ENCODE measurements at regions of chr2 and their contacts with region 1.

Region 1: GRCh38 chr2:61426267-61426897 is 44.5 kb downstream of the USP34 start:
- DNase-seq: no peak
- ATAC-seq: peak; percentile 93
- H3K4me3 ChIP-seq: no peak overlapping the region
- H3K27ac ChIP-seq: peak overlapping the region; percentile 39
- H3K4me1 ChIP-seq: peaks cover 32% of the 10 kb centered on the region
- H3K27me3 ChIP-seq: no peaks in the 10 kb centered on the region
- CTCF ChIP-seq: peak; percentile 75 to 91 (median 88)
- EP300 ChIP-seq: no peak
- POLR2A ChIP-seq: no peak
- RAD21 ChIP-seq: peak; percentile 81

Region 2: GRCh38 chr2:61029533-61029932 is 396.8 kb before region 1 on chr2:
- CTCF ChIA-PET with region 1: no interaction called
- POLR2A ChIA-PET with region 1: no interaction called
- RAD21 ChIA-PET with region 1: no interaction called
- SMC1A ChIA-PET with region 1: no interaction called
- in situ Hi-C with region 1: no loop called
- intact Hi-C with region 1: no loop called
- DNase-seq: no peak
- ATAC-seq: no peak
- H3K4me3 ChIP-seq: no peak overlapping the region
- H3K27ac ChIP-seq: no peak overlapping the region
- H3K4me1 ChIP-seq: no peaks in the 10 kb centered on the region
- H3K27me3 ChIP-seq: no peaks in the 10 kb centered on the region
- CTCF ChIP-seq: no peak
- EP300 ChIP-seq: no peak
- POLR2A ChIP-seq: no peak
- RAD21 ChIP-seq: no peak

Region 3: GRCh38 chr2:61410185-61410584 is 16.2 kb before region 1 on chr2:
- CTCF ChIA-PET with region 1: interaction called, 24 read pairs
- POLR2A ChIA-PET with region 1: interaction called, 4 read pairs
- RAD21 ChIA-PET with region 1: no interaction called
- SMC1A ChIA-PET with region 1: interaction called, 6 read pairs
- in situ Hi-C with region 1: no loop called
- intact Hi-C with region 1: no loop called
- DNase-seq: no peak
- ATAC-seq: no peak
- H3K4me3 ChIP-seq: no peak overlapping the region
- H3K27ac ChIP-seq: no peak overlapping the region
- H3K4me1 ChIP-seq: no peaks in the 10 kb centered on the region
- H3K27me3 ChIP-seq: no peaks in the 10 kb centered on the region
- CTCF ChIP-seq: no peak
- EP300 ChIP-seq: no peak
- POLR2A ChIP-seq: no peak
- RAD21 ChIP-seq: no peak

Region 4: GRCh38 chr2:61460163-61460562 is 33.8 kb after region 1 on chr2:
- CTCF ChIA-PET with region 1: interaction called, 44 read pairs
- POLR2A ChIA-PET with region 1: interaction called, 10 read pairs
- RAD21 ChIA-PET with region 1: interaction called, 30 read pairs
- SMC1A ChIA-PET with region 1: interaction called, 74 read pairs
- in situ Hi-C with region 1: no loop called
- intact Hi-C with region 1: loop called (anchors 2 kb)
- DNase-seq: no peak
- ATAC-seq: no peak
- H3K4me3 ChIP-seq: no peak overlapping the region
- H3K27ac ChIP-seq: no peak overlapping the region
- H3K4me1 ChIP-seq: peaks cover 8% of the 10 kb centered on the region
- H3K27me3 ChIP-seq: no peaks in the 10 kb centered on the region
- CTCF ChIP-seq: no peak
- EP300 ChIP-seq: no peak
- POLR2A ChIP-seq: no peak
- RAD21 ChIP-seq: no peak

Region 5: GRCh38 chr2:61478086-61478485 is 51.7 kb after region 1 on chr2:
- CTCF ChIA-PET with region 1: interaction called, 14 read pairs
- POLR2A ChIA-PET with region 1: interaction called, 5 read pairs
- RAD21 ChIA-PET with region 1: interaction called, 13 read pairs
- SMC1A ChIA-PET with region 1: interaction called, 10 read pairs
- in situ Hi-C with region 1: no loop called
- intact Hi-C with region 1: no loop called
- DNase-seq: no peak
- ATAC-seq: no peak
- H3K4me3 ChIP-seq: no peak overlapping the region
- H3K27ac ChIP-seq: no peak overlapping the region
- H3K4me1 ChIP-seq: no peaks in the 10 kb centered on the region
- H3K27me3 ChIP-seq: no peaks in the 10 kb centered on the region
- CTCF ChIP-seq: no peak
- EP300 ChIP-seq: no peak
- POLR2A ChIP-seq: no peak
- RAD21 ChIP-seq: no peak

Region 6: DNA sequence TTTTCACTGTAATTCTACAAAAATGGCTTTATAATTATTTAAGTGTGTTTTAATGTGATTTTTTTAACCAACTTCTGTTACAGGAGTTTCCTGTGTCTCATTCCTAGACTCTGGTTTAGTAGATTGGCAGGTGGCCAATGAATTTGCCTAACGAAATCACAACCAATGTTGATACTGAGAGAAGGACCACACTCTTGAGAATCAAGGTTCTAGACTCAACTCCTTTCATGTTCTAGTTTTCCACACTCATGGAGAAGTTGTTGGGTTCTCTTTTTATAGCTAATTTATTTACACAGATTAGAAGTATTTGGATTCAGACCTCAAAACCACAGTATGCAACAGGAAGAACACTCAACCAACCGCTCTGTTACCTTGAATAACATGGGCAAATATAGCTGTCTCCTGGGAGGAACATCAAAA is 67.2 kb after region 1 on chr2:
- CTCF ChIA-PET with region 1: interaction called, 16 read pairs
- POLR2A ChIA-PET with region 1: no interaction called
- RAD21 ChIA-PET with region 1: interaction called, 7 read pairs
- SMC1A ChIA-PET with region 1: interaction called, 10 read pairs
- in situ Hi-C with region 1: no loop called
- intact Hi-C with region 1: no loop called
- DNase-seq: no peak
- ATAC-seq: no peak; the same call in 1 of the 3 replicates
- H3K4me3 ChIP-seq: no peak overlapping the region
- H3K27ac ChIP-seq: no peak overlapping the region; the same call in 1 of the 2 replicates
- H3K4me1 ChIP-seq: no peaks in the 10 kb centered on the region
- H3K27me3 ChIP-seq: no peaks in the 10 kb centered on the region
- CTCF ChIP-seq: no peak
- EP300 ChIP-seq: no peak
- POLR2A ChIP-seq: no peak
- RAD21 ChIP-seq: no peak

Region 7: DNA sequence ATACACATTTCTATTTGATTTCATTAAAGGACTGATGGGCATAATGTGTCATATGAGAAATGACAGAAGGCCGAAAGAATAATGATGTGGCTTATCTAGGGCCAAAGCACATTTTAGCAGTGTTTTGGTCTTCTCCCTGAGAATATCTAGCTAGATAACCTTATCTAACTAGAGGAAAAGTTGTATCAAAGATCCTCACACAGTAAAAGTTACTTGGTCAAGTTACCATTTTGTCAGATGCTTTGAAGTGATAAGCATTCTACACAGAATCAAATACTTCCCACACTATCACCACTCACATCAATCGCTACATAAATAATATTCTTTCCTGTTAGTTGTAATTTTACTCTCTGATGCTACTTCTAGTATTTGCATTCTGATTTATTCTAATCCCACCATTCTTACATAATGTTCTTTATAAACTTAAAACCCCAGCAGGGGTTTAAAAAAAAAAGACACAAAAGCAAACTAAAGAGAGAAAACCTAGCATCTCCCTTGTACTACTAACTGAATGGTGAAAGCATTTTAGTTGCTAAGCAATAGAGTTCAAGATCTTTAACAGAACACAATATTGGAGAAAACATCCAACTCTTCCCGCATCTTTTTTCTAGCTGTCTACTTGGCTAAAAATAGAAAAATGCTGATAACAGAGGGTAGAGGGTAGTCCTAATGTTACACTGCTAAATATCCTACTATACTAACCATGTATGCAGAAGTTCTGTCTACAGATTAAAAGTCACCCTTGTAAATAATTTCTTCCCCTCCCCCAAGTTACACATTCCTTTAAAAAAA is 103.8 kb after region 1 on chr2:
- CTCF ChIA-PET with region 1: interaction called, 14 read pairs
- POLR2A ChIA-PET with region 1: interaction called, 4 read pairs
- RAD21 ChIA-PET with region 1: interaction called, 11 read pairs
- SMC1A ChIA-PET with region 1: interaction called, 10 read pairs
- in situ Hi-C with region 1: no loop called
- intact Hi-C with region 1: no loop called
- DNase-seq: no peak
- ATAC-seq: no peak
- H3K4me3 ChIP-seq: 0 out of 2 replicates have a peak overlapping the region, but pooled peaks have one; percentile 0
- H3K27ac ChIP-seq: no peak overlapping the region
- H3K4me1 ChIP-seq: 0 out of 2 replicates have a peak, but pooled peaks cover 5% of the 10 kb centered on the region
- H3K27me3 ChIP-seq: no peaks in the 10 kb centered on the region
- CTCF ChIP-seq: no peak
- EP300 ChIP-seq: no peak
- POLR2A ChIP-seq: no peak
- RAD21 ChIP-seq: no peak

Region 8: GRCh38 chr2:61658841-61659780 is 232.7 kb after region 1 on chr2:
- CTCF ChIA-PET with region 1: interaction called, 21 read pairs
- POLR2A ChIA-PET with region 1: no interaction called
- RAD21 ChIA-PET with region 1: interaction called, 17 read pairs
- SMC1A ChIA-PET with region 1: interaction called, 9 read pairs
- in situ Hi-C with region 1: no loop called
- intact Hi-C with region 1: loop called (anchors 5 kb)
- DNase-seq: peak; percentile 27
- ATAC-seq: peak; percentile 98
- H3K4me3 ChIP-seq: no peak overlapping the region
- H3K27ac ChIP-seq: no peak overlapping the region
- H3K4me1 ChIP-seq: no peaks in the 10 kb centered on the region
- H3K27me3 ChIP-seq: no peaks in the 10 kb centered on the region
- CTCF ChIP-seq: peak; percentile 48 to 67 (median 60); a peak in 5 of 6 replicates
- EP300 ChIP-seq: no peak
- POLR2A ChIP-seq: no peak
- RAD21 ChIP-seq: peak; percentile 89

Region 9: GRCh38 chr2:62029912-62030311 is 603.5 kb after region 1 on chr2:
- CTCF ChIA-PET with region 1: no interaction called
- POLR2A ChIA-PET with region 1: no interaction called
- RAD21 ChIA-PET with region 1: no interaction called
- SMC1A ChIA-PET with region 1: no interaction called
- in situ Hi-C with region 1: no loop called
- intact Hi-C with region 1: no loop called
- DNase-seq: no peak
- ATAC-seq: no peak
- H3K4me3 ChIP-seq: no peak overlapping the region
- H3K27ac ChIP-seq: no peak overlapping the region
- H3K4me1 ChIP-seq: peaks cover 14% of the 10 kb centered on the region
- H3K27me3 ChIP-seq: no peaks in the 10 kb centered on the region
- CTCF ChIP-seq: no peak
- EP300 ChIP-seq: no peak
- POLR2A ChIP-seq: no peak
- RAD21 ChIP-seq: no peak